ENCODE measurements at regions of chr22 and their contacts with region 1.

Region 1: DNA sequence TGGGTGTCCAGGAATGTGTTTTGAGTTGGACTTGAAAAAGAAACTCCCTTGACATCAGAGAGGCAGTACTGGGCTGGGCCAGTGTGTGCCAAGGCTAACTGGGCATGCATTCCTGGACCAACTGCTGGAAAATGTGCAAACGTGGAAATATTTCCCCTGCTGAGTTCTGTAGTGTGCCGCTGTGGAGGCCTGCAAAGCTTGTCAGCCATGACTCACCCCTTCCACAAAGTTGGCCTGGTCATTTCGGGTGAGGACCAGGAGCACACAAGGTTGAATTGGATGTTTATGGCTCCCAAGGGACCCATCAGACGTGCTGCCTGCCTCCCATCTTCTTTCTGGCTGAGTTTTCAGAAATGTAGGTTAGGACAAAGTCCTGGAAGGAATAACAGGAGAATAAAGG is 513.1 kb downstream of the MIAT start:
- DNase-seq: no peak
- H3K4me3 ChIP-seq: no peak overlapping the region
- H3K27ac ChIP-seq: no peak overlapping the region
- H3K4me1 ChIP-seq: no peaks in the 10 kb centered on the region
- H3K27me3 ChIP-seq: no peaks in the 10 kb centered on the region
- CTCF ChIP-seq: no peak

Region 2: DNA sequence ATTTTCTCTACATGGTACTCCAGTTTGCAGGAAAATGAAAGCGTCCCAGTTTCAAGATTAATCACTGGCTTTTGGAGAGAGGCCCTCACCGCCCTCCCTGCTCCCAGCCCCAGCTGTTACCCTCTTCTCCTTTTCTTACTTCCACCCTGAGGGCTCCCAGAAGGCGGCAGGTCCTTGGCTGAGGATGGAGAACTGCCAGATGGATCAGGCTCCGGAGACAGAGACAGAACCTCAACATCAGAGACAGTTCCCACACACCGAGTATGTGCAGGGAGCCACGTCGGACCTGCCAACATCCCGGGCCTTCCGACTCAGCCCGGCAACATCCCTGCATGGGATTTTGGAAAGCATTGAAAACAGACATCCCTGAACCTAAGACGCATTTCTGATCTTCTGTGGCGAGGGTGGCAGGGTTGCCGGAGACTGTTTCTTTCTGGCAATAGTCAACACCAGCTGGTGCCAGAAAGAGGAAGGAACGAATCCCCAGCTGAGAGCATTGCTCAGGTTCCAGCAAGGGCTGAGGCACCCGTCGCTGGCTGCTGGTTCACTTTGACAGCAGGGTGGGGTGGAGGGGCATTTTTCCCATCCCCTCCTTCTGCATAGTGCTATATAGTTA is 46.0 kb before region 1 on chr22:
- CTCF ChIA-PET with region 1: no interaction called
- dilution Hi-C with region 1: loop called (anchors 5 kb)
- in situ Hi-C with region 1: no loop called
- intact Hi-C with region 1: no loop called
- DNase-seq: no peak
- H3K4me3 ChIP-seq: no peak overlapping the region
- H3K27ac ChIP-seq: no peak overlapping the region
- H3K4me1 ChIP-seq: no peaks in the 10 kb centered on the region
- H3K27me3 ChIP-seq: peaks cover 10% of the 10 kb centered on the region
- CTCF ChIP-seq: no peak

Region 3: DNA sequence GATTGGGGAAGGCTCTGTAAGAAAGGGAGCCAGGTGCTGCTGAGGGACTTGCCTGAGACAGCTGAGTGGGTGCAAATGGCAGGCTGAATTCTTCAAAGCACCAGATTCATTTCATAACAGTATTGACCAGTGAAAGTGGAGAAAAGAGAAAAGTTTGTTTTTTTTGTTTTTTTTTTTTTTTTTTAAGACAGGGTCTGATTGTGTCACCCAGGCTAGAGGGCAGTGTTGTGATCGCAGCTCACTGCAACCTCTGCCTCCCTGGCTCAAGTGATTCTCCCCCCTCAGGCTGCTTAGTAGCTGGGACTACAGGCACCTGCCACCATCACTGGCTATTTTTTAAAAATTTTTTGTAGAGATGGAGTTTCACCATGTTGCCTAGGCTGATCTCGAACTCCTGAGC is 19.1 kb before region 1 on chr22:
- CTCF ChIA-PET with region 1: interaction called, 37 read pairs
- dilution Hi-C with region 1: no loop called
- in situ Hi-C with region 1: no loop called
- intact Hi-C with region 1: no loop called
- DNase-seq: no peak
- H3K4me3 ChIP-seq: no peak overlapping the region
- H3K27ac ChIP-seq: no peak overlapping the region
- H3K4me1 ChIP-seq: no peaks in the 10 kb centered on the region
- H3K27me3 ChIP-seq: no peaks in the 10 kb centered on the region
- CTCF ChIP-seq: no peak

Region 4: DNA sequence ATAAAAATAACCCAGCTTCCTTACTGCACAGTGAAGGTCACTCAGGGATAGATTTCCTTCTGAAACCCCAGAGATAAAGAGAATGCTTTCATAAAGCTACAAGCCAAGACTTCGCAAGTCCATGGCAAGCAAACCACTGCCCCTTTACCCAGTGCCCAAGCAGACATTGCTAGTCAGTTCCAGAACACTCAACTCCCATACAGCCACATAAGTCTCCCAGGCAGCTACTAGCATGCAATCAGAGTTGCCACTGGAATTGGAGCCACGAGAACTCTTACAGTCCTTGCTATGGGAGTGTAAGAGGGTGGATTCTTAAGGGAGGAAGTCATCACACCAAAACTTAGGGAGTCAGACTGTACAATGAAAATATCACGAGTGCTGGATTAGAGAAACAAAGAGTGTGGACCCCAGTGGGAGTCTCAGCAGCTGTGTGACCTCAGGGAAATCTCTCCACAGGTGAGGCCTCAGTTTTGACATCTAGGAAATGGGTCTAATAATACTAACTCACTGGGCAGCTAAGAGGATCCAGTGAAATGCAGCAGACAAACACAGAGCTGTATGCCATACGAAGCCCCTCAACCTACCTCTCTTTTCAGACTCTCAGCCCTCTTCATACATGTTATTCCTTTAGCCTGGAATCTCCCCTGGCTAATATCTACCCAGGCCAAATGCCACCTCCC is 104.4 kb after region 1 on chr22:
- CTCF ChIA-PET with region 1: no interaction called
- dilution Hi-C with region 1: loop called (anchors 5 kb)
- in situ Hi-C with region 1: no loop called
- intact Hi-C with region 1: no loop called
- DNase-seq: no peak
- H3K4me3 ChIP-seq: no peak overlapping the region
- H3K27ac ChIP-seq: no peak overlapping the region
- H3K4me1 ChIP-seq: no peaks in the 10 kb centered on the region
- H3K27me3 ChIP-seq: peaks cover 2% of the 10 kb centered on the region
- CTCF ChIP-seq: no peak